Upper lobe of right lung (tissue), 1 donor: ENCODE measurements at regions of chr20 and their contacts with region 1.

Region 1: GRCh38 chr20:32028647-32029372 is 18.6 kb downstream of the CCM2L start:
- DNase-seq: no peak
- ATAC-seq: no peak
- H3K4me3 ChIP-seq: no peak overlapping the region
- H3K27ac ChIP-seq: no peak overlapping the region
- H3K4me1 ChIP-seq: peaks cover 13% of the 10 kb centered on the region
- H3K27me3 ChIP-seq: no peaks in the 10 kb centered on the region
- CTCF ChIP-seq: no peak

Region 2: GRCh38 chr20:31523361-31524283 is 505.2 kb before region 1 on chr20:
- intact Hi-C with region 1: no loop called
- DNase-seq: no peak
- ATAC-seq: peak; percentile 96
- H3K4me3 ChIP-seq: no peak overlapping the region
- H3K27ac ChIP-seq: no peak overlapping the region
- H3K4me1 ChIP-seq: peaks cover 21% of the 10 kb centered on the region
- H3K27me3 ChIP-seq: no peaks in the 10 kb centered on the region
- CTCF ChIP-seq: no peak

Region 3: GRCh38 chr20:31652917-31653396 is 375.9 kb before region 1 on chr20:
- intact Hi-C with region 1: no loop called
- DNase-seq: no peak
- ATAC-seq: no peak
- H3K4me3 ChIP-seq: no peak overlapping the region
- H3K27ac ChIP-seq: no peak overlapping the region
- H3K4me1 ChIP-seq: no peaks in the 10 kb centered on the region
- H3K27me3 ChIP-seq: no peaks in the 10 kb centered on the region
- CTCF ChIP-seq: no peak

Region 4: GRCh38 chr20:31859998-31860709 is 168.7 kb before region 1 on chr20:
- intact Hi-C with region 1: loop called (anchors 10 kb)
- DNase-seq: no peak
- ATAC-seq: peak; percentile 18
- H3K4me3 ChIP-seq: peak overlapping the region; percentile 56
- H3K27ac ChIP-seq: no peak overlapping the region
- H3K4me1 ChIP-seq: peaks cover 11% of the 10 kb centered on the region
- H3K27me3 ChIP-seq: peaks cover 37% of the 10 kb centered on the region
- CTCF ChIP-seq: no peak

Region 5: GRCh38 chr20:31920102-31920855 is 108.5 kb before region 1 on chr20:
- intact Hi-C with region 1: no loop called
- DNase-seq: no peak
- ATAC-seq: no peak
- H3K4me3 ChIP-seq: no peak overlapping the region
- H3K27ac ChIP-seq: no peak overlapping the region
- H3K4me1 ChIP-seq: no peaks in the 10 kb centered on the region
- H3K27me3 ChIP-seq: no peaks in the 10 kb centered on the region
- CTCF ChIP-seq: no peak

Region 6: DNA sequence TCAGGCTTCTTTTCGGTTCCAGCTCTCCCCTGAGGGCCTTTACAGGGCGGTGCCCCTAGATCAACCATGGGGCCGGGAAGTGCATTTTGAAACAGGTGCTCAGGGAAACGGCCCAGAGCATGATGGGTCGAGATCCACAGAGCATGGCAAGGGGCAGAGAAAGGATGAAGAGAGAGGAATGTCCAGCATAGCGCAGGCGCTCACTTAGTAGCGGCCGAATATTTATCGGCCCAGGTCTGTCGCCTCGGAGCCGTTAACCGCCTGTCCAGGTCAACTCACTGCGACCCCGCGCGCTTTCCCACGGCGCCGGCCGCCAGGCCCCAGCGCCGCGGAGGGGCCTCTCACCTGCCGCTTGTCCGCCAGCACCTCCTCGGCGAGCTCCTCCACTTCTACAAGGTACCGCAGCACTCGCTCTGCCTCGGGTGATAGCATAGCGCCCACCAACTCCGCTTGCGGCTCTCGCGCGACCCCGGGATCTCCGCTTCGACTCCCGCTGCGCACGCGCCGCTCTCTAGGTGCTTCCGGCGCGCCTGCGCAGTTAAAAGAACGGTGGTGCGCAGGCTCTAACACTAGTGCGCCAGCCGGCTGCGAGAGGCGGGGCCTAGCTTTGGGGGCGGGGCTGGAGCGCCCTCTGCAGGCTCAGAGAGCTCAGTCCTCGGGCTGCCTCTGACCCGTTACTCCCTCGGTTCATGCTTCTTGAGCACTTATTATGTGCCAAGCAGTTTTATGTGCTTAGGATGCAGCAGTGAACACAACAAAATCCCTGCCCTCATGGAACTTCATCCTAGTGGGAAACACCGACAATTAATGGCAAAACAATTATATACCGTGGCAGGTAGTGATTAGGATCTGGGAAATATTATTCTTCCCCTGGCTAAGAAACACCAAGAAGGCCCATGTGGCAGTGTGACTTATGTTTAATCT is 77.0 kb before region 1 on chr20 and contains the start of gene PDRG1:
- intact Hi-C with region 1: no loop called
- DNase-seq: peak; percentile 97
- ATAC-seq: peak; percentile 99
- H3K4me3 ChIP-seq: peak within 1 kb of the TSS; percentile 95
- H3K27ac ChIP-seq: peak within 1 kb of the TSS; percentile 87
- H3K4me1 ChIP-seq: peaks cover 12% of the 10 kb centered on the region
- H3K27me3 ChIP-seq: no peaks in the 10 kb centered on the region
- CTCF ChIP-seq: peak; percentile 93
- total RNA-seq, gene PDRG1: 8.0 TPM